Endothelial cell of umbilical vein (primary cell): ENCODE measurements at regions of chr5 and their contacts with region 1.

Region 1: DNA sequence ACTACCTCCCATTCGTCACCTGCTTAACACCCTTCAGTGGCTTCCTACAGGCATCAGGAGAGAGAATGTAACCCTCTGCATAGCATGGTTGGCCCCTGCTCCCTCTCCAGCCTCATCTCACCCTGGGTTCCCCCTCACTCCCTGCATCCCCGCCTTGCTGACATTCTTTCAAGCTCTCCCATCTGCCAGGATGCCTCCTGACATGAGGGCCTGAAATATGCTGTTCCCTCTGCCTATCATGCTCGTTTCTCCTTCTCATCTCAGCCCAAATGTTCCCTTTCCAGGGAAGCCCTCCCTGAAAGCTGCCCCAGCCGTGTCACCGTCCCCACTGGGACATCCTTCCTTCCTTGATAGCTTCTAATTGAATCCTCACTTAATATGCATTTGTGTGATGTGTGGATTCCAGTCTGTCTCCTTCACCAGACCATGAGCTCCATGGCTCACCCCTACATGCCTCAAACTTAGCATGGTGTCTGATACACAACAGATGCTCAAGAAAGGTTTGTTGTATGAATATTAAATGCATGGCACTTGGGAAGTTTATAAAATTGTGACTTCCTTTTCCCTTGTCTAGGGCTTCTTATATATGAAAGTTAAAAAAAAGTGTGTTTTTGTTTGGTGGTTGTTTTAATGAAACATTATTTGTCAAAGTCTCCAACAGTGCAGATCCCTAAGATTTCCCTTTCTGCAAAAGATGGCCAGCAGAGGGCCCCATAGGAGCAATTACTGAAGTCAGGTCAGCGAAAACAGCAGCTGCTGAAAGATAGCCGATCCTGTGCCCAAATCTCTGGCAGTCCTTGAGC is 7.3 kb upstream of the C5orf58 start:
- DNase-seq: peak; percentile 64
- H3K4me3 ChIP-seq: no peak overlapping the region
- H3K27ac ChIP-seq: peak overlapping the region; percentile 23
- H3K4me1 ChIP-seq: peaks cover 45% of the 10 kb centered on the region
- H3K27me3 ChIP-seq: peaks cover 0 to 3% of the 10 kb centered on the region in 2 experiments
- CTCF ChIP-seq: peak; percentile 64 to 74
- POLR2A ChIP-seq: no peak

Region 2: GRCh38 chr5:170183816-170184687 is 41.5 kb before region 1 on chr5:
- CTCF ChIA-PET with region 1: interaction called, 21 read pairs
- POLR2A ChIA-PET with region 1: no interaction called
- dilution Hi-C with region 1: no loop called
- intact Hi-C with region 1: no loop called
- DNase-seq: peak; percentile 65
- H3K4me3 ChIP-seq: no peak overlapping the region
- H3K27ac ChIP-seq: no peak overlapping the region
- H3K4me1 ChIP-seq: no peaks in the 10 kb centered on the region
- H3K27me3 ChIP-seq: no peaks in the 10 kb centered on the region
- CTCF ChIP-seq: peak; percentile 84 to 94
- POLR2A ChIP-seq: no peak

Region 3: DNA sequence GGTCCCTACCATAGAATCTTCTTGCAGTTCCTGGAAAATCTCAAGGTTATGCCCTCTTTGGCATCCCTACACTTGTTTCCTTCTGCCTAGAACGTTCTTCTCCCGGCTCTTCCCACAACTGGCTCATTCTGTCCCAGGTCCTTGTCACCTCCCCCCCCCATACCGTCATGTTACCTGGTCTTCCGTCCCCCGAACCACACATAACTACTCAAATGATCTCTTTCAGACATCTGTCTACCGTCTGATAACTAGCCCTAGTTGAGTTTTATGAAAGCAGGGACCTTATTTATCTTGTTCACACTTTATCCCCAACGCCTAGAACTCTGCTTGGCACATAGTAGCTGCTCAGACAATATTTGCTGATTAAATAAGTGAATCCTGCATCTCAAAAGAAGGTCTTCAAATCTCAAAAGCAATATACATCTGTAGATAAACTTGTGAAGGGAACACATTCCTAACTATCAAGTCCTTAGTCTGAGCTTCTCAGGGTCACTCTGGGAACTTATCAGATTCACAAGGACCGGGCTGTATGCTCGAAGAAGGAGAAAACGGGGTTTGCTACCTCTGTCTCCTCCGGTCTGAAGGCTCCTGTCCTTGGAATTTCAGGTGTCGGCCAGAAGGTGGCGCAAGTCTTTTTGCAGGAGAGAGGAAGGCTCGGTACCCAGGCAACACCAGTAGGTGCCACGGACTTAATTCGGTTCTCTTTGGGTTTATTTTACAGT is 42.1 kb after region 1 on chr5:
- CTCF ChIA-PET with region 1: interaction called, 32 read pairs
- POLR2A ChIA-PET with region 1: no interaction called
- dilution Hi-C with region 1: no loop called
- intact Hi-C with region 1: loop called (anchors 1 kb)
- DNase-seq: peak; percentile 75
- H3K4me3 ChIP-seq: no peak overlapping the region
- H3K27ac ChIP-seq: no peak overlapping the region
- H3K4me1 ChIP-seq: no peaks in the 10 kb centered on the region
- H3K27me3 ChIP-seq: peaks cover 17 to 35% of the 10 kb centered on the region in 2 experiments
- CTCF ChIP-seq: peak; percentile 81 to 83
- POLR2A ChIP-seq: no peak

Region 4: GRCh38 chr5:170404402-170404801 is 178.9 kb after region 1 on chr5:
- CTCF ChIA-PET with region 1: interaction called, 14 read pairs
- POLR2A ChIA-PET with region 1: no interaction called
- dilution Hi-C with region 1: no loop called
- intact Hi-C with region 1: no loop called
- DNase-seq: no peak
- H3K4me3 ChIP-seq: no peak overlapping the region
- H3K27ac ChIP-seq: no peak overlapping the region
- H3K4me1 ChIP-seq: no peaks in the 10 kb centered on the region
- H3K27me3 ChIP-seq: peaks cover 0 to 2% of the 10 kb centered on the region in 2 experiments
- CTCF ChIP-seq: no peak
- POLR2A ChIP-seq: no peak

Region 5: DNA sequence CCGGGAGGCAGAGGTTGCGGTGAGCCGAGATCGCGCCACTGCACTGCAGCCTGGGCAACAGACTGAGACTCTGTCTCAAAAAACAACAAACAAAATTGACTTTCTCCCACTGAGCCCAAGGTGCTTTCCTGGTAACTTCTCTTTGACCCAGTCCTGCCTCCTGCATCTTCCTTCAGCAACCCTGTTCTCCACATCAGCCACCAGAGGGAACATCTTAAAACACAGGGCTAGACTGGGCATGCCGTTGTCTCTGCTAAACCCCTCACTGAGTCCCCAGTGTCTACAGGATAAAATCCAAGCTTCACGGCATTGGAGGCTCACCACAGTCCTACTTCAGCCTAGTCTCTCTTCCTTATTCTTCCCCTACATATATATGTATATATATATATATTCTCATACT is 203.5 kb after region 1 on chr5:
- CTCF ChIA-PET with region 1: interaction called, 140 read pairs
- POLR2A ChIA-PET with region 1: no interaction called
- dilution Hi-C with region 1: no loop called
- intact Hi-C with region 1: no loop called
- DNase-seq: no peak
- H3K4me3 ChIP-seq: no peak overlapping the region
- H3K27ac ChIP-seq: no peak overlapping the region
- H3K4me1 ChIP-seq: no peaks in the 10 kb centered on the region
- H3K27me3 ChIP-seq: peaks cover 8 to 10% of the 10 kb centered on the region in 2 experiments
- CTCF ChIP-seq: peak in 1 of 2 donors; percentile 19
- POLR2A ChIP-seq: no peak

Region 6: GRCh38 chr5:170623576-170624181 is 398.2 kb after region 1 on chr5:
- CTCF ChIA-PET with region 1: interaction called, 7 read pairs
- POLR2A ChIA-PET with region 1: no interaction called
- dilution Hi-C with region 1: no loop called
- intact Hi-C with region 1: loop called (anchors 2 kb)
- DNase-seq: peak; percentile 61
- H3K4me3 ChIP-seq: no peak overlapping the region
- H3K27ac ChIP-seq: no peak overlapping the region
- H3K4me1 ChIP-seq: no peaks in the 10 kb centered on the region
- H3K27me3 ChIP-seq: peaks cover 2 to 3% of the 10 kb centered on the region in 2 experiments
- CTCF ChIP-seq: peak; percentile 74 to 87
- POLR2A ChIP-seq: no peak